ENCODE measurements at regions of chr17 and their contacts with region 1.

Region 1: DNA sequence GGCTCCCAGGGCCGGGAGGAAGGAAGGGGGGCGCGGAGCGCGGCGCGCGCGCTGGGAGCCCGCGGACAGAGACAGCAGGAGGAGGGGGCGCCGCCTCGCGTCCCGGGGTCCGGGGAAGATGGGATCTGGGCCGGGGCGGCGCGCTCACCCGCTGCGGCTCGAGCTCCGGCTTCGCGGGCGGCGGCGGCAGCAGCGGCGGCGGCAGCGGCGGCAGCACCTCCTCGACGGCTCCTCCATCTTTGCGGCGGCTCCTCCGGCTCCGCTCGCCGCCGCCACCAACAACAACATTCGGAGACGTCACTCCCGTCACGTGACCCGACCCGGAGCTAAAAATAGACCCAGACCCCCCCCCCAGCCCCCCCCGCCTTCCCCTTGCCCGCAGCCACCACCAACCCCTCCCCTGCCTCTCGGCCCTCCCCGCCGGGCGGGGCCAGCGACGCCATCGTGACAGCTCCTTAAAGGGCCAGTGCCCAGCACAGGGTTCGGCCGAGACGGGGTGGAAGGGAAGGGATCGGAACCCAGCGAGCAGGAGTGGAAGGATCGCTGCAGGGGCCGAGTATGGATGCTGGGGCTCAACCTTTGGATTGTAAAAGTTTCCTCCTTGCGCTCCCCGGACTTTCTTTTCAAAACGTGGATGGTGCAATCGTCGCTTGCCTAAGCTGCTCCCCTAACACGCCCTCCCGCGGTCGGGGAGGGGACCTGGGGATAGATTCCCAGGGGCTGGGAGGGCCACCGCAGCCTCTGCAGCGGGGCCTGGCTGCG is at the start of gene HDAC5:
- DNase-seq: peak; percentile 97
- H3K4me3 ChIP-seq: peak within 1 kb of the TSS; percentile 69
- H3K4me3 Mint-ChIP-seq: peak within 1 kb of the TSS; percentile 94
- H3K27ac Mint-ChIP-seq: peak within 1 kb of the TSS; percentile 97
- H3K4me1 ChIP-seq: peaks cover 5% of the 10 kb centered on the region; the same call in 1 of the 2 replicates
- H3K4me1 Mint-ChIP-seq: peaks cover 7% of the 10 kb centered on the region
- H3K27me3 ChIP-seq: no peaks in the 10 kb centered on the region
- H3K27me3 Mint-ChIP-seq: no peaks in the 10 kb centered on the region
- CTCF ChIP-seq: peak; percentile 67 to 92
- total RNA-seq, gene HDAC5: 25.9 and 27.0 TPM in 2 replicates

Region 2: GRCh38 chr17:44006598-44007345 is 116.8 kb before region 1 on chr17:
- CTCF ChIA-PET with region 1: no interaction called
- POLR2A ChIA-PET with region 1: no interaction called
- intact Hi-C with region 1: no loop called
- DNase-seq: peak; percentile 95 to 99
- H3K4me3 ChIP-seq: peak overlapping the region; percentile 50
- H3K4me3 Mint-ChIP-seq: peak overlapping the region; percentile 69
- H3K27ac Mint-ChIP-seq: peak overlapping the region; percentile 5
- H3K4me1 ChIP-seq: peaks cover 18% of the 10 kb centered on the region
- H3K4me1 Mint-ChIP-seq: no peaks in the 10 kb centered on the region
- H3K27me3 ChIP-seq: peaks cover 3% of the 10 kb centered on the region
- H3K27me3 Mint-ChIP-seq: peaks cover 4% of the 10 kb centered on the region
- CTCF ChIP-seq: peak; percentile 33 to 53

Region 3: GRCh38 chr17:44070455-44071197 is 52.9 kb before region 1 on chr17 and contains the start of gene G6PC3:
- CTCF ChIA-PET with region 1: interaction called, 4 read pairs
- POLR2A ChIA-PET with region 1: interaction called, 11 read pairs
- intact Hi-C with region 1: loop called (anchors 1 kb)
- DNase-seq: peak; percentile 98 to 99
- H3K4me3 ChIP-seq: peak within 1 kb of the TSS; percentile 89
- H3K4me3 Mint-ChIP-seq: peak within 1 kb of the TSS; percentile 96
- H3K27ac Mint-ChIP-seq: peak within 1 kb of the TSS; percentile 100
- H3K4me1 ChIP-seq: peaks cover 19% of the 10 kb centered on the region
- H3K4me1 Mint-ChIP-seq: peaks cover 15% of the 10 kb centered on the region
- H3K27me3 ChIP-seq: no peaks in the 10 kb centered on the region
- H3K27me3 Mint-ChIP-seq: no peaks in the 10 kb centered on the region
- CTCF ChIP-seq: no peak
- total RNA-seq, gene G6PC3: 60.1 and 64.5 TPM in 2 replicates

Region 4: GRCh38 chr17:44084131-44084544 is 39.4 kb before region 1 on chr17:
- CTCF ChIA-PET with region 1: interaction called, 19 read pairs
- POLR2A ChIA-PET with region 1: no interaction called
- intact Hi-C with region 1: no loop called
- DNase-seq: peak in 1 of 2 experiments; percentile 49
- H3K4me3 ChIP-seq: no peak overlapping the region
- H3K4me3 Mint-ChIP-seq: no peak overlapping the region
- H3K27ac Mint-ChIP-seq: no peak overlapping the region
- H3K4me1 ChIP-seq: peaks cover 25% of the 10 kb centered on the region
- H3K4me1 Mint-ChIP-seq: peaks cover 14% of the 10 kb centered on the region
- H3K27me3 ChIP-seq: no peaks in the 10 kb centered on the region
- H3K27me3 Mint-ChIP-seq: no peaks in the 10 kb centered on the region
- CTCF ChIP-seq: peak; percentile 27 to 42

Region 5: DNA sequence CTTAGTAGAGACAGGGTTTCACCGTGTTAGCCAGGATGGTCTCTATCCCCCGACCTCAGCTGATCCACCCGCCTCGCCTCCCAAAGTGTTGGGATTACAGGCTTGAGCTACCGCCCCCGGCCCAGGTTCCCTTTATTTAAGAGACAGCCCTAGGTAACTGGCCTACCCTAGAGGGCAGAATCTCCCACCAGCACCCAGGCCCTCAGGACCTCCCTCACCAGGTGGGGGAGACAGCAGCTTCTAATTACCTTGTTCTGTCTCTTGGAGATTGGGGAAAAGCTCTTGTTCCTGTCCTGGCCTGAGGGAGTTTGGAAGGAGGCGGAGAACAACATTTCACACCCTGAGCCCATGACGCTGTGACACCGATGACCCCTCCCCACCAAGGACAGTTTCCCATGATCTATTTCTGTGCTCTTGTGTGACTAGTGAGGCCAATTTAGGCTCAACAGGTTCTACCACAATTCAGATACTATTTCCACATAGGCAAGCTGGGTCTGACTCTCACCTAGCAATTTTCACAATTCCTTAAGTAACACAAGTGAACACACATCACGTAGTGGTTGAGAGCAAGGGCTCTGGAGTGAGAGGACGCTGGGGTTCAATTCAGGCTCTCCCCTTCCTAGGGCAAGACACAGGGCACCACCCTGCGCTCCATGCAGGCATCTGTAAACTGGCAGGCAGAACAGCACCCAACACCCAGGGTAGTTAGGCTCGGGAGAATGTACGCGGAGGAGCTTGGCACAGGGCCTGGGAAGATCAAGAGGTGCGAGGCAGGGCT is 20.5 kb before region 1 on chr17:
- CTCF ChIA-PET with region 1: interaction called, 11 read pairs
- POLR2A ChIA-PET with region 1: interaction called, 6 read pairs
- intact Hi-C with region 1: no loop called
- DNase-seq: peak; percentile 78 to 79
- H3K4me3 ChIP-seq: no peak overlapping the region
- H3K4me3 Mint-ChIP-seq: peak overlapping the region; percentile 32
- H3K27ac Mint-ChIP-seq: peak overlapping the region; percentile 87
- H3K4me1 ChIP-seq: peaks cover 12% of the 10 kb centered on the region
- H3K4me1 Mint-ChIP-seq: peaks cover 8% of the 10 kb centered on the region
- H3K27me3 ChIP-seq: no peaks in the 10 kb centered on the region
- H3K27me3 Mint-ChIP-seq: no peaks in the 10 kb centered on the region
- CTCF ChIP-seq: peak in 1 of 2 experiments; percentile 37

Region 6: GRCh38 chr17:44108440-44109324 is 14.9 kb before region 1 on chr17:
- CTCF ChIA-PET with region 1: interaction called, 13 read pairs
- POLR2A ChIA-PET with region 1: interaction called, 6 read pairs
- intact Hi-C with region 1: no loop called
- DNase-seq: peak; percentile 74 to 82
- H3K4me3 ChIP-seq: no peak overlapping the region
- H3K4me3 Mint-ChIP-seq: no peak overlapping the region
- H3K27ac Mint-ChIP-seq: peak overlapping the region; percentile 81
- H3K4me1 ChIP-seq: peaks cover 19% of the 10 kb centered on the region
- H3K4me1 Mint-ChIP-seq: peaks cover 7% of the 10 kb centered on the region
- H3K27me3 ChIP-seq: no peaks in the 10 kb centered on the region
- H3K27me3 Mint-ChIP-seq: no peaks in the 10 kb centered on the region
- CTCF ChIP-seq: no peak

Region 7: GRCh38 chr17:44141717-44142285 is 18.3 kb after region 1 on chr17 and contains the start of gene HROB:
- CTCF ChIA-PET with region 1: interaction called, 21 read pairs
- POLR2A ChIA-PET with region 1: interaction called, 12 read pairs
- intact Hi-C with region 1: loop called (anchors 1 kb)
- DNase-seq: peak; percentile 98 to 99
- H3K4me3 ChIP-seq: peak within 1 kb of the TSS; percentile 66
- H3K4me3 Mint-ChIP-seq: peak within 1 kb of the TSS; percentile 91
- H3K27ac Mint-ChIP-seq: peak within 1 kb of the TSS; percentile 95
- H3K4me1 ChIP-seq: peaks cover 18% of the 10 kb centered on the region
- H3K4me1 Mint-ChIP-seq: peaks cover 11% of the 10 kb centered on the region
- H3K27me3 ChIP-seq: no peaks in the 10 kb centered on the region
- H3K27me3 Mint-ChIP-seq: no peaks in the 10 kb centered on the region
- CTCF ChIP-seq: peak; percentile 95 to 97
- total RNA-seq, gene HROB: 15.2 and 17.0 TPM in 2 replicates

Region 8: DNA sequence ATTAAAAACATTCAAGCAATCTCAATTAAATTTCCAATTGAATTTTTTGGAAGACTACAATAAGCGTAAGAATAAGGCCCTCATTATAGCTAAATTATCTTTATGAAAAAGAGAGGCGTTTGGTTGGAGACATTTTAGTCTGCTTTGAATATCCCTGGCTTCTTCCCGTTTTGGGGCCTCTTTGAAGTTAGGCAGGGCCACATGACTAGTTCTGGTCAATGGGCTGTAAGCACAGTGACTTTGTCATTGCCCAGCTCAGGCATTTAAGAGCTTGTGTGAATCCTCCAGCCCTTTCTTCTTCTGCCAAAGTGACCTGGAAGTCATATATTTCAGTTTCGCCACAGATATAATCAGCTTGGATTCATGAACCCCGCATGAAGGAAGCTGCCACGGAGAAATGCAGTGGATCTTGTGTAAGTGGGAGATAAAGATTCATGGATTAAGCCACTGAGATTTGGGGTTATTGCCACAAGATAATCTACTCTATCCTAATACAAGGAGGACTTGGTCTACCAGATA is 117.6 kb after region 1 on chr17:
- CTCF ChIA-PET with region 1: no interaction called
- POLR2A ChIA-PET with region 1: no interaction called
- intact Hi-C with region 1: no loop called
- DNase-seq: no peak
- H3K4me3 ChIP-seq: no peak overlapping the region
- H3K4me3 Mint-ChIP-seq: no peak overlapping the region
- H3K27ac Mint-ChIP-seq: no peak overlapping the region
- H3K4me1 ChIP-seq: 0 out of 2 replicates have a peak, but pooled peaks cover 2% of the 10 kb centered on the region
- H3K4me1 Mint-ChIP-seq: peaks cover 5% of the 10 kb centered on the region
- H3K27me3 ChIP-seq: no peaks in the 10 kb centered on the region
- H3K27me3 Mint-ChIP-seq: no peaks in the 10 kb centered on the region
- CTCF ChIP-seq: no peak

Measured in Caco-2 (cell line).